ENCODE measurements at regions of chr5 and their contacts with region 1.

Region 1: DNA sequence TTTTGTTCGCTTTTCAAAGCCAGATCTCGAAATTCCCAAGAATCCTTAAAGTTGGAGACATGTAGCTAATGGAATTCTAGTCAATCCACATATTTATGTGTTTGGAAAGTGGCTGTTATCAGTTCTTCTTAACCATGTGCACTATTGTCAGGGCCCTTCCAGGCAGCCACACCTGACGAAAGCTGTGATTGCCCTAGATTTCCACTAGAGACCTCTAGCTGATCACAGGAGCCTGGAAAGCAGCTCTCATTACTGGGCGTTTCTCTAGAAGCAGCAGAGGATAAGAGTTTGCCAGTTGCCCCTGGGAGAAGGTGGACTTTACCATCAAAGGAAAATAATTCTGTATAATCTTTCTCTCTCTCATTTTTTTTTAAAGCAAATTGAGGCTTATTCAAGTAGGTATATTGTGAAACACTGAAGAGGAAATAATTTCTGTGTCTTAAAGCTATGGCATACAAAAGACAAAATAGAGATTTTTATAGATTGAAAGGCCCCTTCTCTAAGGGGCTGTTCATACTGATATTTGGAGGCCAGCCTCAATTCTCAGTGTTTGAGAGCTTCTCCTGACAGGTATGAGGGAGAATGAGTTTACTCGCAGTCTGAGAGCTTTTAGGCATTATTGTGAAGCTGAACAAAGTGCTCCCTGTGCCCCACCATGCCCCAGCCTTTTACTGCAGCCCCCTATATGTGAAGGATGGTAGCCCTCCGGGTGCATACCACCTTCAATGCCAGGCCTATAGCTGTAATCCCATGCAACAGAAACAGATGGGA is 405.4 kb upstream of the ACTBL2 start:
- DNase-seq: peak; percentile 58 to 64
- H3K4me3 ChIP-seq: no peak overlapping the region
- H3K27ac ChIP-seq: peak overlapping the region; percentile 48
- H3K4me1 ChIP-seq: peaks cover 18% of the 10 kb centered on the region
- H3K27me3 ChIP-seq: no peaks in the 10 kb centered on the region
- CTCF ChIP-seq: peak; percentile 58

Region 2: GRCh38 chr5:57366744-57367143 is 521.3 kb before region 1 on chr5:
- CTCF ChIA-PET with region 1: no interaction called
- POLR2A ChIA-PET with region 1: no interaction called
- intact Hi-C with region 1: loop called (anchors 2 kb)
- DNase-seq: peak; percentile 55 to 98
- H3K4me3 ChIP-seq: no peak overlapping the region
- H3K27ac ChIP-seq: peak overlapping the region; percentile 92
- H3K4me1 ChIP-seq: peaks cover 58% of the 10 kb centered on the region
- H3K27me3 ChIP-seq: no peaks in the 10 kb centered on the region
- CTCF ChIP-seq: no peak

Region 3: GRCh38 chr5:57692582-57693487 is 195.2 kb before region 1 on chr5:
- CTCF ChIA-PET with region 1: no interaction called
- POLR2A ChIA-PET with region 1: no interaction called
- intact Hi-C with region 1: loop called (anchors 2 kb)
- DNase-seq: peak; percentile 83 to 86
- H3K4me3 ChIP-seq: no peak overlapping the region; the same call in 1 of the 2 replicates
- H3K27ac ChIP-seq: peak overlapping the region; percentile 91
- H3K4me1 ChIP-seq: peaks cover 25% of the 10 kb centered on the region
- H3K27me3 ChIP-seq: no peaks in the 10 kb centered on the region
- CTCF ChIP-seq: no peak

Region 4: DNA sequence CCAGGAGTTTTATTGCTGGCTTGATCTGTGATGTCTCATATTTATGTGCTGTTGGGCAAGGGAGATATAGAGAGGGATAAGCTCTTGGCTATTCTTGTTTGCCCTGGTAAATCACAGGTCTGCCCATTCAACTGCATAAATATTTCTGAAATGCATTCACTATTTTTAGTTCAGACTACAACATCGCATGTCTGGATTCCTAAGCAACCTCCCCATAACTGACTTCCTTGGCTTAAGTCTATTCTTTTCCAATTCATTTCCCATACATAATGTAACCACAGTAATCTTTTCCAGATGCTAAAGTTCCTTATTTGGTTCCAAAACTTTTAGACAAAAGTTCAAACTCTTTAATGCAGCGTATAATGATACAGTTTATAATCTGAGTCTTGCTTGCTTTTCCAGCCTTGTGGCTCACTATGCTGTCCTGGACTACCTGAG is 84.0 kb before region 1 on chr5:
- CTCF ChIA-PET with region 1: no interaction called
- POLR2A ChIA-PET with region 1: no interaction called
- intact Hi-C with region 1: no loop called
- DNase-seq: peak in 1 of 2 experiments; percentile 58
- H3K4me3 ChIP-seq: no peak overlapping the region
- H3K27ac ChIP-seq: 0 out of 2 replicates have a peak overlapping the region, but pooled peaks have one; percentile 30
- H3K4me1 ChIP-seq: no peaks in the 10 kb centered on the region
- H3K27me3 ChIP-seq: no peaks in the 10 kb centered on the region
- CTCF ChIP-seq: no peak

Region 5: DNA sequence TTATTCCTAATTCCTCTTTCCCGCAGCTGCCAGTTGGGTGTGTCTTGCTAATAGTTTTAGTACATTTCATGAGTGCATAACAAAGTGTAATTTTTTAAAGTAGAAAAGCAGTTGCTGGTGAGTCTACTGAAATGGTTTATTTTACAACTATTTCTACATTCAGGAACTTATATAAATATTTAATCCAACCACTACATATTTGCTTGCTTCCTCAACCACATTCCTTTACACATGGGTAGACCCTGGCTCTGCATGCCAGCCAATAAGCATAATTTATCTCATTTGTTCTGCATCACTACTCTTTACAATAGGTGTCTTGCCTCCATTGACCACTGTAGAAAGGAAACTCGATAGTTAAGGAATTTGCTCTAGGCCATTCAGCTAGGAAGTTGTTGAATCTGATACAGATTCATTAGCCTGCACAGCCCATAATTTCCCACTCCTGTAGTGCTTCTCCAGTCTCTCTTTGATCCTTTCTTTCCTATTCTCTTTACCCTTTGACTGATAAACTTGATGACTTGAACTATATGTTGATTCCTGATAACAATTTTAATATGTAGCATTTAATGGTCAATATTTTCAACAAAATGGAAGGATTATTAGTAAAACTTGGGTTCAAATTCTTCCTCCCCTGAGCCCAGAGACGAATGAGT is 62.9 kb before region 1 on chr5:
- CTCF ChIA-PET with region 1: no interaction called
- POLR2A ChIA-PET with region 1: interaction called, 3 read pairs
- intact Hi-C with region 1: loop called (anchors 1 kb)
- DNase-seq: peak; percentile 63 to 99
- H3K4me3 ChIP-seq: no peak overlapping the region
- H3K27ac ChIP-seq: peak overlapping the region; percentile 97
- H3K4me1 ChIP-seq: peaks cover 39% of the 10 kb centered on the region
- H3K27me3 ChIP-seq: no peaks in the 10 kb centered on the region
- CTCF ChIP-seq: no peak

Region 6: DNA sequence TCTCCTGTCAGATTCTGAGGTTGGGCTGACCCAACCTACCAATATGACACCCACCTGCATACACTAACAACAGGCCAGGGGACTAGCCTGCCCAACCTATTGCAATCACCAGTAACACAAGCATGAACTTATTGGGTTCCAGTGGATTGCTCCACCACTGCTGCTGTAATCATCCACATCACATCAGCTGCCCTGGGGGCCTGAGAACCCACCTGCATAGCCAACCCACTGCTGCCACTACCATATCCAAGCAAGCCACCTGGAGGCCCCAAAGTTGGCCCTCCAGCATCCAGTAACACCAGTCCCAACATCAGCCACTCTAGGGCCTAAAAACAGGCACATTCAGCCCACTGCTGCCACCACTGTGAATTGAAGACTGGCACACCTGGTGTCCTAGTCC is 77.3 kb after region 1 on chr5:
- CTCF ChIA-PET with region 1: no interaction called
- POLR2A ChIA-PET with region 1: no interaction called
- intact Hi-C with region 1: no loop called
- DNase-seq: no peak
- H3K4me3 ChIP-seq: no peak overlapping the region
- H3K27ac ChIP-seq: no peak overlapping the region
- H3K4me1 ChIP-seq: no peaks in the 10 kb centered on the region
- H3K27me3 ChIP-seq: no peaks in the 10 kb centered on the region
- CTCF ChIP-seq: no peak

Region 7: GRCh38 chr5:58019614-58020013 is 131.6 kb after region 1 on chr5:
- CTCF ChIA-PET with region 1: no interaction called
- POLR2A ChIA-PET with region 1: no interaction called
- intact Hi-C with region 1: loop called (anchors 1 kb)
- DNase-seq: no peak
- H3K4me3 ChIP-seq: no peak overlapping the region
- H3K27ac ChIP-seq: no peak overlapping the region
- H3K4me1 ChIP-seq: peaks cover 46% of the 10 kb centered on the region
- H3K27me3 ChIP-seq: no peaks in the 10 kb centered on the region
- CTCF ChIP-seq: no peak

Region 8: GRCh38 chr5:58460732-58461286 is 572.8 kb after region 1 on chr5:
- CTCF ChIA-PET with region 1: interaction called, 14 read pairs
- POLR2A ChIA-PET with region 1: interaction called, 12 read pairs
- intact Hi-C with region 1: loop called (anchors 1 kb)
- DNase-seq: peak; percentile 79 to 91
- H3K4me3 ChIP-seq: peak overlapping the region; percentile 90
- H3K27ac ChIP-seq: peak overlapping the region; percentile 96
- H3K4me1 ChIP-seq: peaks cover 14% of the 10 kb centered on the region
- H3K27me3 ChIP-seq: no peaks in the 10 kb centered on the region
- CTCF ChIP-seq: peak; percentile 83